ENCODE measurements at regions of chr19 and their contacts with region 1.

Region 1: DNA sequence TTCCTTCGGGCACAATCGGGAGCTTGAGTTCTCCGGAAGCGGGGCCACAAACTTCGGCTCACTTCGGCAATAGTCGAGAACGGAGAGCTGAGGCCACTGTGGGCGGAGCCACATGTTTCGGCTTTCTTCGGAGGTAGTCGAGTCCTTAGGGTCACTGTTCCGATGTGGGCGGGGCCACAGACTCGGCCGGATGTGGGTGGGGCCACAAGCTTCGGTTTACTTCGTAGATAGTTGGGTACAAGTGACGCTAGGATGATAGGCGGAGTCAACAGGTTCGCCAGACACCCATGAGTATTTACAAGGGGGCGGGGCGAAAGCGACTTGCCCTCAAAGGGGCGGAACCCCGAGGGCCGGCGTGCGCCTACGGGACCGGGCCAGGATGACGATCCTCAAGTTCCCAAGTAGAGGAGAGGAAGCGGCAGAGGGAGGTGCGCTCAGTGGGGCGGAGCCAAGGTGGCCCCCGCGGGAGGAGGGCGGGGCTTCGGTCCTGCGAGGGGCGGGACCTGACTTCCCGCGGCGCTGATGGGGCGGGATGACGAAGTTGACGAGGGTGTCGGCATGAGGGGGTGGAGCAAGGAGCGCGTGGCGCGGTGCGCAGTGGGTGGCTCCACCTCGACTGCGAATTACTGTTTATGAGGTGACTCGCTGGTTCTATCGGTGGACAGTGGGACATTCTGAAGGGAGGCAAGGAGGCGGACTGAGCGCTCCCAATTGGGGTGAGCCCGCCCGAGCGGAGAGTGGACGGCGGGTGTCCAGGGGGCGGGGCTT is 539 bp upstream of the MBOAT7 start:
- DNase-seq: peak; percentile 99 to 100 (median 100)
- ATAC-seq: peak; percentile 62
- H3K4me3 ChIP-seq: peak overlapping the region; percentile 69 to 76
- H3K4me3 Mint-ChIP-seq: peak overlapping the region; percentile 91
- H3K27ac ChIP-seq: peak overlapping the region; percentile 100
- H3K27ac Mint-ChIP-seq: peak overlapping the region; percentile 100
- H3K4me1 ChIP-seq: peaks cover 22% of the 10 kb centered on the region
- H3K4me1 Mint-ChIP-seq: peaks cover 38% of the 10 kb centered on the region
- H3K27me3 ChIP-seq: no peaks in the 10 kb centered on the region
- H3K27me3 Mint-ChIP-seq: no peaks in the 10 kb centered on the region
- CTCF ChIP-seq: no peak

Region 2: GRCh38 chr19:54029930-54030490 is 159.9 kb before region 1 on chr19:
- CTCF ChIA-PET with region 1: no interaction called
- POLR2A ChIA-PET with region 1: no interaction called
- intact Hi-C with region 1: no loop called
- DNase-seq: peak in 8 of 9 experiments; percentile 32 to 66 (median 56)
- ATAC-seq: no peak
- H3K4me3 ChIP-seq: no peak overlapping the region
- H3K4me3 Mint-ChIP-seq: no peak overlapping the region
- H3K27ac ChIP-seq: no peak overlapping the region
- H3K27ac Mint-ChIP-seq: no peak overlapping the region
- H3K4me1 ChIP-seq: no peaks in the 10 kb centered on the region
- H3K4me1 Mint-ChIP-seq: no peaks in the 10 kb centered on the region
- H3K27me3 ChIP-seq: no peaks in the 10 kb centered on the region
- H3K27me3 Mint-ChIP-seq: peaks cover 24% of the 10 kb centered on the region
- CTCF ChIP-seq: peak; percentile 48

Region 3: GRCh38 chr19:54102421-54103169 is 87.3 kb before region 1 on chr19 and contains the start of gene NDUFA3:
- CTCF ChIA-PET with region 1: no interaction called
- POLR2A ChIA-PET with region 1: no interaction called
- intact Hi-C with region 1: loop called (anchors 1 kb)
- DNase-seq: peak; percentile 94 to 100 (median 98)
- ATAC-seq: peak; percentile 99
- H3K4me3 ChIP-seq: peak within 1 kb of the TSS; percentile 66 to 81
- H3K4me3 Mint-ChIP-seq: peak within 1 kb of the TSS; percentile 99
- H3K27ac ChIP-seq: peak within 1 kb of the TSS; percentile 58 to 84
- H3K27ac Mint-ChIP-seq: peak within 1 kb of the TSS; percentile 96
- H3K4me1 ChIP-seq: peaks cover 10% of the 10 kb centered on the region
- H3K4me1 Mint-ChIP-seq: peaks cover 35% of the 10 kb centered on the region
- H3K27me3 ChIP-seq: no peaks in the 10 kb centered on the region
- H3K27me3 Mint-ChIP-seq: no peaks in the 10 kb centered on the region
- CTCF ChIP-seq: no peak
- total RNA-seq, gene NDUFA3: 51.8 to 66.8 TPM

Region 4: DNA sequence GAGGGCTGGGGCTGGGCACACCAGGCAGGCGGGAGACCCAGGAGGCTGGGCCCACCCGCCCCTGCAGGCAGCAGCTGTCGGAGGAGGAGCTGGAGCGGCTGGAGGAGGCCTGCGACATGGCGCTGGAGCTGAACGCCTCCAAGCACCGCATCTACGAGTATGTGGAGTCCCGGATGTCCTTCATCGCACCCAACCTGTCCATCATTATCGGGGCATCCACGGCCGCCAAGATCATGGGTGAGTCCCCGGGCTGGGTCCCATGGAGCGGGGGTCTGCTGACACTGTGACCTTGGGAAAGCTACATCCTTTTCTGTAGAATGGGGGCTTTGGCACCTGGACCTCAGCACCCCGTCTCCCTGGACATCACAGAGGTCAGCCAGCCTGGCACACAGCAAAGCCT is 66.2 kb before region 1 on chr19:
- CTCF ChIA-PET with region 1: no interaction called
- POLR2A ChIA-PET with region 1: no interaction called
- intact Hi-C with region 1: no loop called
- DNase-seq: no peak
- ATAC-seq: no peak
- H3K4me3 ChIP-seq: no peak overlapping the region
- H3K4me3 Mint-ChIP-seq: no peak overlapping the region
- H3K27ac ChIP-seq: no peak overlapping the region
- H3K27ac Mint-ChIP-seq: no peak overlapping the region
- H3K4me1 ChIP-seq: no peaks in the 10 kb centered on the region
- H3K4me1 Mint-ChIP-seq: no peaks in the 10 kb centered on the region
- H3K27me3 ChIP-seq: no peaks in the 10 kb centered on the region
- H3K27me3 Mint-ChIP-seq: no peaks in the 10 kb centered on the region
- CTCF ChIP-seq: no peak

Region 5: GRCh38 chr19:54137086-54137921 is 52.6 kb before region 1 on chr19 and contains the start of gene CNOT3:
- CTCF ChIA-PET with region 1: interaction called, 3 read pairs
- POLR2A ChIA-PET with region 1: interaction called, 39 read pairs
- intact Hi-C with region 1: loop called (anchors 1 kb)
- DNase-seq: peak; percentile 95 to 100 (median 99)
- ATAC-seq: peak; percentile 76
- H3K4me3 ChIP-seq: peak within 1 kb of the TSS; percentile 55 to 74
- H3K4me3 Mint-ChIP-seq: peak within 1 kb of the TSS; percentile 88
- H3K27ac ChIP-seq: peak within 1 kb of the TSS; percentile 85 to 97
- H3K27ac Mint-ChIP-seq: peak within 1 kb of the TSS; percentile 95
- H3K4me1 ChIP-seq: peaks cover 33% of the 10 kb centered on the region
- H3K4me1 Mint-ChIP-seq: peaks cover 50% of the 10 kb centered on the region
- H3K27me3 ChIP-seq: peaks cover 0 to 3% of the 10 kb centered on the region in 2 experiments
- H3K27me3 Mint-ChIP-seq: no peaks in the 10 kb centered on the region
- CTCF ChIP-seq: no peak
- total RNA-seq, gene CNOT3: 30.8 to 42.3 TPM

Region 6: GRCh38 chr19:54203151-54203611 is 13.3 kb after region 1 on chr19:
- CTCF ChIA-PET with region 1: interaction called, 4 read pairs
- POLR2A ChIA-PET with region 1: interaction called, 99 read pairs
- intact Hi-C with region 1: loop called (anchors 1 kb)
- DNase-seq: no peak
- ATAC-seq: no peak
- H3K4me3 ChIP-seq: no peak overlapping the region
- H3K4me3 Mint-ChIP-seq: peak overlapping the region; percentile 100
- H3K27ac ChIP-seq: no peak overlapping the region
- H3K27ac Mint-ChIP-seq: peak overlapping the region; percentile 70
- H3K4me1 ChIP-seq: peaks cover 68% of the 10 kb centered on the region
- H3K4me1 Mint-ChIP-seq: peaks cover 77% of the 10 kb centered on the region
- H3K27me3 ChIP-seq: no peaks in the 10 kb centered on the region
- H3K27me3 Mint-ChIP-seq: no peaks in the 10 kb centered on the region
- CTCF ChIP-seq: no peak

Region 7: GRCh38 chr19:54231077-54231931 is 41.4 kb after region 1 on chr19:
- CTCF ChIA-PET with region 1: interaction called, 7 read pairs
- POLR2A ChIA-PET with region 1: no interaction called
- intact Hi-C with region 1: loop called (anchors 1 to 5 kb)
- DNase-seq: peak; percentile 75 to 93 (median 87)
- ATAC-seq: peak; percentile 98
- H3K4me3 ChIP-seq: no peak overlapping the region
- H3K4me3 Mint-ChIP-seq: no peak overlapping the region
- H3K27ac ChIP-seq: no peak overlapping the region
- H3K27ac Mint-ChIP-seq: no peak overlapping the region
- H3K4me1 ChIP-seq: no peaks in the 10 kb centered on the region
- H3K4me1 Mint-ChIP-seq: no peaks in the 10 kb centered on the region
- H3K27me3 ChIP-seq: peaks cover 0 to 3% of the 10 kb centered on the region in 2 experiments
- H3K27me3 Mint-ChIP-seq: peaks cover 13% of the 10 kb centered on the region
- CTCF ChIP-seq: peak; percentile 96

Region 8: GRCh38 chr19:54463531-54464043 is 273.7 kb after region 1 on chr19 and contains the start of gene LENG9:
- CTCF ChIA-PET with region 1: no interaction called
- POLR2A ChIA-PET with region 1: no interaction called
- intact Hi-C with region 1: loop called in 1 of 2 experiments (anchors 1 kb)
- DNase-seq: peak; percentile 81 to 100 (median 91)
- ATAC-seq: peak; percentile 70
- H3K4me3 ChIP-seq: peak within 1 kb of the TSS; percentile 79 to 83
- H3K4me3 Mint-ChIP-seq: peak within 1 kb of the TSS; percentile 86
- H3K27ac ChIP-seq: peak within 1 kb of the TSS; percentile 81 to 84
- H3K27ac Mint-ChIP-seq: peak within 1 kb of the TSS; percentile 93
- H3K4me1 ChIP-seq: peaks cover 20% of the 10 kb centered on the region
- H3K4me1 Mint-ChIP-seq: peaks cover 36% of the 10 kb centered on the region
- H3K27me3 ChIP-seq: no peaks in the 10 kb centered on the region
- H3K27me3 Mint-ChIP-seq: no peaks in the 10 kb centered on the region
- CTCF ChIP-seq: no peak
- total RNA-seq, gene LENG9: 2.3 to 2.7 TPM